ENCODE measurements at regions of chr11 and their contacts with region 1.

Region 1: GRCh38 chr11:12281571-12282478 is 95.5 kb upstream of the PARVA start:
- DNase-seq: peak; percentile 86
- H3K4me3 Mint-ChIP-seq: no peak overlapping the region
- H3K27ac Mint-ChIP-seq: no peak overlapping the region
- H3K4me1 Mint-ChIP-seq: peaks cover 7% of the 10 kb centered on the region
- H3K27me3 Mint-ChIP-seq: no peaks in the 10 kb centered on the region

Region 2: DNA sequence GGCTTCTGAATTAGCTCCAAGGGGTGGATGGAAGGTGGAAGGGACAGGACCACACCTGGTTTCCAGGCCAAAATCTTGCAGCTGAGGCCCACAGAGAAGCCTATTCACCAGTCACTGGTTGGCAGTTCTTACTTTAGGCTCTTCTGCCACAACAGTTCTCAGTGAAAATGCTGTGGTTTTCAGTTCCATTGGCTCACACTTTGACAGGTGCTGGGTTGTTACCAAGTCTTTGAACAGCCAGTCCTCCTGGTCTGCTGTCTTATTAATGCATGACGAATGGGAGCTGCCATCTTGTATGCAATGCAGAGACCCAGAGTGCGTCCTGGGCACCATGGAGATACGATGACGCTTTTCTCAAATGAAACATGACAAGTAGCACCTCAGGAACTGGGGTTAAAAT is 1192.0 kb before region 1 on chr11:
- CTCF ChIA-PET with region 1: no interaction called
- POLR2A ChIA-PET with region 1: no interaction called
- intact Hi-C with region 1: no loop called
- DNase-seq: no peak
- H3K4me3 Mint-ChIP-seq: no peak overlapping the region
- H3K27ac Mint-ChIP-seq: no peak overlapping the region
- H3K4me1 Mint-ChIP-seq: no peaks in the 10 kb centered on the region
- H3K27me3 Mint-ChIP-seq: peaks cover 4% of the 10 kb centered on the region

Region 3: DNA sequence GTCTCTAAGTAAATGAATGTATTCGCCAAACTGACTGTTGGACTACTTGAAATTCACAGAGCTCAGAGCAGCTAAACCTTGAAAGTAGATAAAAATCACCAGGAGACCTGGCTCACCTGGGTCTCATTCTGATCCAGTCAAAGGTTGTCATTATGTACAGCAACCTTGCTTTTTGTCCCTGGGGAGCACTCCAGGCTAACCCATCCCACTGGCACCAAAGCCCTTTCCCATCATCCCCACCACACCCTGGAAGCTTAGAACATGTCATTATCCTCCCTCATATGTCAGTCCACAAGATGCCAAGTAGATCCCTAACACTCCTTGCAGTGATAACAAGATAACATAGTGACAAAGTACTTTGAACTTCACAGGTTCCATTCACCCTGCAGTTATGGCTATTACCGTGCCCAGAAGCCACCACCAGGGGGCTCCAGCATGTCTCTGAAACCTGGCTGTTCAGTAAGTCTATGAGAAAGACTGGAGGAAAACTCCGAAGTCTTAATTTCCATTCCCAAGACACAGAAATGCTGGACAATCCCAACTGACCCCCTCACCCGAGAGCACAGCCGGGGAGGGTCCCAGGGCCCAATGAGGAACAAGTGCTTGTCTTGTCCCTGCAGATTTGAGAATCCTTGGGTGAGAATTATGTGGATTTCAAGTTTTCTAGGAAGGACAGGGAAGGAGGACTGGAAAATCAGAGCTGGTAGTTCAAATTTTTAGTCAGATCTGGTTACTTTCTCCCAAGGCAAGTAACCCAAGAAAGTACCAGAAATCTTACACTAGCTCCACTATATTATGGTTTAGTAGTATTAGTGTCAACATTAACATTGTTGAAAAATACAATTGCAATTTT is 483.0 kb before region 1 on chr11:
- CTCF ChIA-PET with region 1: interaction called, 18 read pairs
- POLR2A ChIA-PET with region 1: no interaction called
- intact Hi-C with region 1: loop called (anchors 5 kb)
- DNase-seq: peak; percentile 85
- H3K4me3 Mint-ChIP-seq: no peak overlapping the region
- H3K27ac Mint-ChIP-seq: no peak overlapping the region
- H3K4me1 Mint-ChIP-seq: no peaks in the 10 kb centered on the region
- H3K27me3 Mint-ChIP-seq: peaks cover 21% of the 10 kb centered on the region

Region 4: GRCh38 chr11:12043959-12044819 is 237.6 kb before region 1 on chr11:
- CTCF ChIA-PET with region 1: interaction called, 418 read pairs
- POLR2A ChIA-PET with region 1: interaction called, 7 read pairs
- intact Hi-C with region 1: loop called (anchors 1 kb)
- DNase-seq: peak; percentile 76
- H3K4me3 Mint-ChIP-seq: no peak overlapping the region
- H3K27ac Mint-ChIP-seq: no peak overlapping the region
- H3K4me1 Mint-ChIP-seq: peaks cover 4% of the 10 kb centered on the region
- H3K27me3 Mint-ChIP-seq: peaks cover 1% of the 10 kb centered on the region

Region 5: GRCh38 chr11:12087075-12088004 is 194.5 kb before region 1 on chr11:
- CTCF ChIA-PET with region 1: interaction called, 10 read pairs
- POLR2A ChIA-PET with region 1: no interaction called
- intact Hi-C with region 1: no loop called
- DNase-seq: peak; percentile 64
- H3K4me3 Mint-ChIP-seq: peak overlapping the region; percentile 13
- H3K27ac Mint-ChIP-seq: peak overlapping the region; percentile 68
- H3K4me1 Mint-ChIP-seq: peaks cover 60% of the 10 kb centered on the region
- H3K27me3 Mint-ChIP-seq: no peaks in the 10 kb centered on the region

Region 6: GRCh38 chr11:12269104-12269441 is 12.8 kb before region 1 on chr11:
- CTCF ChIA-PET with region 1: interaction called, 13 read pairs
- POLR2A ChIA-PET with region 1: no interaction called
- intact Hi-C with region 1: no loop called
- DNase-seq: no peak
- H3K4me3 Mint-ChIP-seq: no peak overlapping the region
- H3K27ac Mint-ChIP-seq: no peak overlapping the region
- H3K4me1 Mint-ChIP-seq: no peaks in the 10 kb centered on the region
- H3K27me3 Mint-ChIP-seq: no peaks in the 10 kb centered on the region